ENCODE measurements at regions of chr6 and their contacts with region 1.

Region 1: GRCh38 chr6:159252955-159253508 is 83.8 kb downstream of the FNDC1 start:
- DNase-seq: peak; percentile 88
- H3K27ac ChIP-seq: no peak overlapping the region
- CTCF ChIP-seq: peak; percentile 70

Region 2: GRCh38 chr6:159217595-159218275 is 35.3 kb before region 1 on chr6:
- CTCF ChIA-PET with region 1: interaction called, 11 read pairs
- POLR2A ChIA-PET with region 1: no interaction called
- DNase-seq: peak; percentile 36
- H3K27ac ChIP-seq: no peak overlapping the region
- CTCF ChIP-seq: no peak

Region 3: DNA sequence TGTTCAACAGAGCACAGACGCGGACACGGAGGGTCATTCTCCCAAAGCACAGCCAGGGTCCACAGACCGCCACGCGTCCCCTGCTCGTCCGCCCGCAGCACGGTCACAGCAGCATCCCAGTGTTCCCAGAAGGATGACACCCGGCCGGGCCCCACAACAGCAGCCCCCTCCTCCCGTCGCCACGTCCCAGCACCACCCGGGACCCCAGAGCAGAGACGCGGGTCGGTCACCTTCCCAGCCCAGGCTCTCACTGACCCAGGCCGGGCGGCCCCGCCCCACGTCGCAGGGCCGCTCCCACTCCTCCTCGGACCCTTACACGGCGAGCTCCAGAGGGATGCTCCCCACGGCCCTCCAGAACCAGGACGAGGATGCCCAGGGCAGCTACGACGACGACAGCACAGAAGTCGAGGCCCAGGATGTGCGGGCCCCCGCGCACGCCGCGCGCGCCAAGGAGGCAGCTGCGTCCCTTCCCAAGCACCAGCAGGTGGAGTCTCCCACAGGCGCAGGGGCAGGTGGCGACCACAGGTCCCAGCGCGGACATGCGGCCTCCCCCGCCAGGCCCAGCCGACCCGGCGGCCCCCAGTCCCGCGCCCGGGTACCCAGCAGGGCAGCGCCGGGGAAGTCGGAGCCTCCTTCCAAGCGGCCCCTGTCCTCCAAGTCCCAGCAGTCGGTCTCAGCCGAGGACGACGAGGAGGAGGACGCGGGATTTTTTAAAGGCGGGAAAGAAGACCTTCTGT is 19.5 kb before region 1 on chr6:
- CTCF ChIA-PET with region 1: interaction called, 12 read pairs
- POLR2A ChIA-PET with region 1: no interaction called
- DNase-seq: no peak
- H3K27ac ChIP-seq: no peak overlapping the region
- CTCF ChIP-seq: no peak

Measured in RWPE1 (cell line).